ENCODE measurements at regions of chr17 and their contacts with region 1.

Region 1: DNA sequence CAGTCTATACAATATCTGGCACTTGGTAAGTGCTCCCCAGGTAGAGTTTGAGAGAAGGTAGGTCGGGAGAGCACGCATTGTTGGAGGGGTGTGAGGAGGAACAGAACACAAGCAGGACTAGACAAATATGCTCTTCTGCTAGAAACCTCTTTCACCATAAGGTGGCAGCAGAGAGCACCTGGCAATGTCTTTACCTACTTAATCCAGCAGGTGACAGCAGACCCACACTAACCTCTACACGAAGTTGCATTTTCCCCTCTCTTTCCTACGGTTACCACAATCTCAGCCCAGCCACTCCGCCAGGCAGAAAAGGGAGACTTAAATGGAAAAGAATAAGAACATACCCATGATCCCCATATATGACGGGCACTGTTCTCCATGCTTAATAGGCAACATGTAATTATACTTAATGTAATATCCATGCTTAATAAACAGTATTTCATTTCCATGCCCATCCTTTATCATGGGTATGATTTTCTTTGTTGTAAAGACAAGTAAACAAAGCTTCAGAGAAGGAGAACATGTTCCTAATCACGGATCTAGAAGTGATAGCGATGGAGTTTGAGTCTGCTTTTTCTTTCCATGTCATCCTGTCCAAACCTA is 55.1 kb upstream of the CCL2 start:
- DNase-seq: peak; percentile 81
- ATAC-seq: peak; percentile 84
- H3K4me3 Mint-ChIP-seq: no peak overlapping the region
- H3K27ac Mint-ChIP-seq: no peak overlapping the region
- H3K4me1 Mint-ChIP-seq: peaks cover 4% of the 10 kb centered on the region
- H3K27me3 Mint-ChIP-seq: peaks cover 24% of the 10 kb centered on the region

Region 2: DNA sequence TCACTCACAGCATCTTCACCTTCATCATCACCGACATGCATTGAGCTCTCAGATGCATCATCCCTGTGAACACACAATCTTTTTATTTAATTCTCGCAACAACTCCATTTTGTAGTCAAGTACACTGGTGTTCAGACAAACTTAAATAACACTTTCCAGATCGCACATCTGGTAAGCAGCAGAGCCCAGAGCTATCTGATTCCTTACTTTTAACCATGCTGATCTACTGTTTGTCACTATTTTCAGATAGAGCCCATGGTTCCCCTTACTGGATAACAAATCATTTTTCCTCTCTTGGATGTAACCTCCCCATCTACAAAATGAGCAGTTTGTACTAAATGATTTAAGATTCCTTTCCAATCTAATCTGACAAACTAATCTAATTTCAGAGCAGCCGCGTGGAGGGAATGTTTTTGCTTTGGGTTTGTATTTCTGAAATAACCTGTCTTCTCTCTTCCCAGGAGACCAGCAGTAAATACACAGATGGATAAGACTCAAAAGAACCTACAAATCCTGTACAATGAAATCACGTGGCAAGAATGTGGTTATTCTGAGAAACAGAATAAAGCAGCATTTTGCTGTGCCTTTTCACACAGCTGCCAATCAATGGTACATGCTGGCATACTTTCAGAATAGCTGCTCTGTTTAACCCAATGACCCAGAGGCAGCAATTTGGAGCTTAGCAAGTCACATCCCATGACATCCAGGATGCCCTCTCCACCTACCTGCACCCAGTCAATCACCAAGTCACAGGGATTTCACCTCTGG is 17.8 kb before region 1 on chr17:
- CTCF ChIA-PET with region 1: no interaction called
- POLR2A ChIA-PET with region 1: no interaction called
- DNase-seq: no peak
- ATAC-seq: no peak
- H3K4me3 Mint-ChIP-seq: no peak overlapping the region
- H3K27ac Mint-ChIP-seq: no peak overlapping the region
- H3K4me1 Mint-ChIP-seq: peaks cover 6% of the 10 kb centered on the region
- H3K27me3 Mint-ChIP-seq: peaks cover 18% of the 10 kb centered on the region

Region 3: DNA sequence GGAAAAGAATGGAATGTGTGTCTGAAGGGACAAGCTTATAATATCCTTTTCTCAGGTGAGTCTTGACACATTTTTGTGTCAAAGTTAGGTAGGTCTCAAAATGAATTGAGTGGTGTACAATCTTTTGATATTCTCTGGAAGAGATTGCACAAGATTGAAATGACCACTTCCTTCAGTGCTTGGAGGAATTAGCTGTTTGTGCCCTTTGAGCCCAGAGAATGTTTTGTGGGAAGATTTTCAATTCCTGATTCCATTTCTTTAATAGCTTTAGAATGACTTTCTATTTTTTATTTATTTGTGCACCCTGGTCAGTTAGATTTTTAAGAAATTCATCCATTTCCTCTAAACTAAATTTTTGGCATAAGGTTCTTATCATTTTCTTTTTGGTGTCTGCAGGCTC is 154.6 kb after region 1 on chr17:
- CTCF ChIA-PET with region 1: interaction called, 313 read pairs
- POLR2A ChIA-PET with region 1: no interaction called
- DNase-seq: no peak
- ATAC-seq: no peak
- H3K4me3 Mint-ChIP-seq: no peak overlapping the region
- H3K27ac Mint-ChIP-seq: no peak overlapping the region
- H3K4me1 Mint-ChIP-seq: no peaks in the 10 kb centered on the region
- H3K27me3 Mint-ChIP-seq: peaks cover 35% of the 10 kb centered on the region

Region 4: GRCh38 chr17:34370997-34371395 is 171.0 kb after region 1 on chr17:
- CTCF ChIA-PET with region 1: interaction called, 10 read pairs
- POLR2A ChIA-PET with region 1: no interaction called
- DNase-seq: no peak
- ATAC-seq: no peak
- H3K4me3 Mint-ChIP-seq: no peak overlapping the region
- H3K27ac Mint-ChIP-seq: no peak overlapping the region
- H3K4me1 Mint-ChIP-seq: peaks cover 34% of the 10 kb centered on the region
- H3K27me3 Mint-ChIP-seq: peaks cover 18% of the 10 kb centered on the region

Measured in activated CD8-positive, alpha-beta T cell treated with anti-CD3 and anti-CD28 coated beads, Interleukin-2, amount 10 ng/mL, durations not matched to agents 7 days and 5 days (primary cell).